Ascending aorta (tissue), 2 donors: ENCODE measurements at regions of chrX and their contacts with region 1.

Region 1: DNA sequence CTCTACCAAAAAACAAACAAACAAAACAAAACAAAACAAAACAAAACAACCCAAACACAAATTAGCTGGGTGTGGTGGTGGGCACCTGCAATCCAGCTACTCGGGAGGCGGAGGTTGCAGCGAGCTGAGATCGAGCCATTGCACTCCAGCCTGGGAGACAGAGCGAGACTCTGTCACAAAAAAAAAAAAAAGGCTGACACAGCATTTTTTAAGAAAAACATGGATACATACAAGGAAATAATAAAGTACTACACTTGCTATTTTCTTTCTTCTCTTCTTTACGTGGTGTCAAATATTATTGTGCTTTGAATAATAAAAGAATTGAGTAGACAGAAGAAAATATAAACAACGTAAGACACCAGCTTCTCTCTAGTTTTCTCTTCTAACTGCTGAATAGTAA is 73.9 kb downstream of the TEX11 start:
- DNase-seq: no peak
- H3K4me3 ChIP-seq: no peak overlapping the region
- H3K27ac ChIP-seq: no peak overlapping the region
- H3K4me1 ChIP-seq: no peaks in the 10 kb centered on the region
- H3K27me3 ChIP-seq: no peaks in the 10 kb centered on the region
- CTCF ChIP-seq: no peak

Region 2: GRCh38 chrX:70901465-70901864 is 66.9 kb after region 1 on chrX:
- intact Hi-C with region 1: loop called (anchors 10 kb)
- DNase-seq: no peak
- H3K4me3 ChIP-seq: no peak overlapping the region
- H3K27ac ChIP-seq: no peak overlapping the region
- H3K4me1 ChIP-seq: no peaks in the 10 kb centered on the region
- H3K27me3 ChIP-seq: no peaks in the 10 kb centered on the region
- CTCF ChIP-seq: no peak

Region 3: GRCh38 chrX:70978928-70979762 is 144.6 kb after region 1 on chrX:
- intact Hi-C with region 1: no loop called
- DNase-seq: no peak
- H3K4me3 ChIP-seq: no peak overlapping the region
- H3K27ac ChIP-seq: no peak overlapping the region
- H3K4me1 ChIP-seq: no peaks in the 10 kb centered on the region
- H3K27me3 ChIP-seq: no peaks in the 10 kb centered on the region
- CTCF ChIP-seq: no peak

Region 4: DNA sequence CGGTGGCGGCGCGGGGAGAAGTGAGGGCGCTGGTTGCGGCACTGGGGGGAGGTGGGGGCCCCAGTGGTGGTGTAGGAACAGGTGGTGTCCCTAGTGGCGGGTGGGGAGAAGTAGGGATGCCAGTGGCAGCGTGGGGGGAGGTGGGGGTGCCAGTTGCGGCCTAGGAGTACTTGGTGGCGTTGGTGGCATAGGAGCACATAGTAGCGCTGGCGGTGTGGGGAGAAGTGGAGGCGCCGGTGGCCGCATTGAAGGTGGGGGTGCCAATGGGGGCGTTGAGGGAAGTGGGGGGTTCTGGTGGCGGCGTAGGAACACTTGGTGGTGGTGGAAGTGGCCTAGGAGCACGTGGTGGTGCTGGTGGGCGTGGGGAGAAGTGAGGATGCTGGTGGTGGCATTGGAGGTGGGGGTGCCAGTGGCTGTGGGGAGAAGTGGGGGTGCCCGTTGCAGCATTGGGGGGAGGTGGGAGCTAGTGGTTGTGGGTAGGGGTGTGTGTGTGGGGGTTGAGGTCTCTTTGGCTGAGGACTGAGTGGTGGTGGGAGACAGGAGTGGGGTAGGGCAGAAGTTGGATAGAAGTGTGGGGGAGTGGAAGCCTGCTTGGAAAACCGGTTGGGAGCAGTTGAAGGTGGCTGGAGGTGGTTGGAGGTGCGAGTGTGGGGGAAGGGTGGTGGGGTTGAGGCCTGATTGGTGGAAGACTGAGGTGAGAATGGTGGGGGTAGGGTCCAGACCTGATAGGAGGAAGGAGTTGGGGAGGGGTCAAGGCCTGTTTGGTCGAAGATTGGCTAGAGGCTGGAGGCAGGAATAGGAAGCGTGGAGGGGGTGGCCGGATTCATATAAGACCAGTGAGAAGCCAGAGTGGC is 744.8 kb after region 1 on chrX:
- intact Hi-C with region 1: no loop called
- DNase-seq: no peak
- H3K4me3 ChIP-seq: no peak overlapping the region
- H3K27ac ChIP-seq: no peak overlapping the region
- H3K4me1 ChIP-seq: no peaks in the 10 kb centered on the region
- H3K27me3 ChIP-seq: no peaks in the 10 kb centered on the region
- CTCF ChIP-seq: no peak